ENCODE measurements at regions of chr13 and their contacts with region 1.

Region 1: DNA sequence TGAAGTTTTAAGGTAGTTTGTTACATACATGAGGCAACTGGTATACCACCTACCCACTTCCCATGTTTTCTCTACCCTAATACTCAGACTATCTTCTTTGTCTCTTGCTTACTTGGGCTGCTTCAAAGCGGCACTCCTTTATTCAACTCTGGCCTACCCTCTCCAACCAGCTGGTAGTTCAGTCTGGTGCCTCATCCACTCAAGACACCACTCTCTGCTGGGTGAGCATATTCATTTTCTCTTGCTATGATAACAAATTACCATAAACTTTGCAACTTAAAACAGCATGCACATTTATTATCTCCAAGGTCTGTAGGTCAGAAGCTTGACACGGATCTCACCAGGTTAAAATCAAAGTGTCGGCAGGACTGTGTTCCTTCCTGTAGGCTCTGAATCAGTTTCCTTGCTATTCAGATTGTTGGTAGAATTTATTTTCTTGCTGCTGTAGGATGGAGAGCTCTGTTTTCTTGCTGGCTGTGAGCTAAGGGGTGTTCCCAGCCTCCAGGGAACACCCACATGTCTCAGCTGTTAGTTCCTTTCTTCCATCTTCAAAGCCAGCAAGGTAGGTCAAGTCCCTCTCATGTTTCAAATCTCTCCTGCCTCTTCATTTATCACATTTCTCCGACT is 666.0 kb downstream of the DIAPH3 start:
- DNase-seq: no peak
- ATAC-seq: no peak
- H3K4me3 ChIP-seq: no peak overlapping the region
- H3K27ac ChIP-seq: no peak overlapping the region
- H3K4me1 ChIP-seq: no peaks in the 10 kb centered on the region
- H3K27me3 ChIP-seq: no peaks in the 10 kb centered on the region; a peak in 1 of 4 replicates
- CTCF ChIP-seq: no peak
- EP300 ChIP-seq: no peak
- POLR2A ChIP-seq: no peak
- RAD21 ChIP-seq: no peak

Region 2: GRCh38 chr13:59533561-59534555 is 36.1 kb after region 1 on chr13:
- CTCF ChIA-PET with region 1: no interaction called
- POLR2A ChIA-PET with region 1: no interaction called
- RAD21 ChIA-PET with region 1: no interaction called
- SMC1A ChIA-PET with region 1: interaction called, 4 read pairs
- in situ Hi-C with region 1: no loop called
- intact Hi-C with region 1: loop called (anchors 1 kb)
- DNase-seq: no peak
- ATAC-seq: no peak
- H3K4me3 ChIP-seq: no peak overlapping the region
- H3K27ac ChIP-seq: no peak overlapping the region
- H3K4me1 ChIP-seq: no peaks in the 10 kb centered on the region
- H3K27me3 ChIP-seq: no peaks in the 10 kb centered on the region
- CTCF ChIP-seq: no peak
- EP300 ChIP-seq: no peak
- POLR2A ChIP-seq: no peak
- RAD21 ChIP-seq: no peak

Region 3: DNA sequence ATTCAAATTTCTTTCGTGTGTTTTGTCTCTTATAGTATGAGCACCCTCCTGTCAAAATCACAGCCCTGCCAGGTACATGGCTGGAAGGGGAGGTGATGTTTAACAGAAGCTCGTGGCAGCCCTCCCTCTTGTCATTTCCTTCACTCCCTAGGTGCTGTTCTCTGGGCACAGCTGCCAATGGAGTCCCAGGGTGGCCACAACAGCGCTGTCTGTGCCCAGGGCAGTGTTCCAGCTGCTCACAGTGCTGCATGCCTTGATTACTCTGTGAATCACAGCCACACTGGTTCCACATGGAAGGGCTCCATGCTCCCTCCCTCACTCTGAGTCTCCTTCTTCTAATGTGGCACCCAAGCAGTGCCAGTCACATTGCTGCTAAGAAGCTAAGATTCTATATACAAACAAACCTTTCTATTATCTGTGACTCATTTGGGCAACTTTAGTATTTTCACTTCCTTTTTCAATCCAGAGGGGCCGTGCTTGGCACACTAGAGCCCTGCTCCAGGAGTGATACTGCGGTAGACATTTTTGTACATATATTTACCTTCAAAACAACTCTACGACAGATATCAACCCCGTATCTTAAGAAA is 1147.9 kb after region 1 on chr13:
- CTCF ChIA-PET with region 1: no interaction called
- POLR2A ChIA-PET with region 1: no interaction called
- RAD21 ChIA-PET with region 1: no interaction called
- SMC1A ChIA-PET with region 1: no interaction called
- in situ Hi-C with region 1: no loop called
- intact Hi-C with region 1: no loop called
- DNase-seq: no peak
- ATAC-seq: peak; percentile 88
- H3K4me3 ChIP-seq: no peak overlapping the region
- H3K27ac ChIP-seq: no peak overlapping the region
- H3K4me1 ChIP-seq: no peaks in the 10 kb centered on the region; the same call in 1 of the 2 replicates
- H3K27me3 ChIP-seq: no peaks in the 10 kb centered on the region
- CTCF ChIP-seq: no peak
- EP300 ChIP-seq: no peak
- POLR2A ChIP-seq: no peak
- RAD21 ChIP-seq: no peak

Measured in GM12878 (cell line).